ENCODE measurements at regions of chr9 and their contacts with region 1.

Region 1: GRCh38 chr9:107727086-107727780 is 237.7 kb upstream of the KLF4 start:
- DNase-seq: no peak
- ATAC-seq: no peak
- H3K4me3 ChIP-seq: no peak overlapping the region
- H3K4me3 Mint-ChIP-seq: no peak overlapping the region
- H3K27ac ChIP-seq: no peak overlapping the region
- H3K27ac Mint-ChIP-seq: no peak overlapping the region
- H3K4me1 ChIP-seq: no peaks in the 10 kb centered on the region
- H3K4me1 Mint-ChIP-seq: no peaks in the 10 kb centered on the region
- H3K27me3 ChIP-seq: no peaks in the 10 kb centered on the region
- H3K27me3 Mint-ChIP-seq: peaks cover 0 to 2% of the 10 kb centered on the region in 2 donors
- CTCF ChIP-seq: no peak

Region 2: DNA sequence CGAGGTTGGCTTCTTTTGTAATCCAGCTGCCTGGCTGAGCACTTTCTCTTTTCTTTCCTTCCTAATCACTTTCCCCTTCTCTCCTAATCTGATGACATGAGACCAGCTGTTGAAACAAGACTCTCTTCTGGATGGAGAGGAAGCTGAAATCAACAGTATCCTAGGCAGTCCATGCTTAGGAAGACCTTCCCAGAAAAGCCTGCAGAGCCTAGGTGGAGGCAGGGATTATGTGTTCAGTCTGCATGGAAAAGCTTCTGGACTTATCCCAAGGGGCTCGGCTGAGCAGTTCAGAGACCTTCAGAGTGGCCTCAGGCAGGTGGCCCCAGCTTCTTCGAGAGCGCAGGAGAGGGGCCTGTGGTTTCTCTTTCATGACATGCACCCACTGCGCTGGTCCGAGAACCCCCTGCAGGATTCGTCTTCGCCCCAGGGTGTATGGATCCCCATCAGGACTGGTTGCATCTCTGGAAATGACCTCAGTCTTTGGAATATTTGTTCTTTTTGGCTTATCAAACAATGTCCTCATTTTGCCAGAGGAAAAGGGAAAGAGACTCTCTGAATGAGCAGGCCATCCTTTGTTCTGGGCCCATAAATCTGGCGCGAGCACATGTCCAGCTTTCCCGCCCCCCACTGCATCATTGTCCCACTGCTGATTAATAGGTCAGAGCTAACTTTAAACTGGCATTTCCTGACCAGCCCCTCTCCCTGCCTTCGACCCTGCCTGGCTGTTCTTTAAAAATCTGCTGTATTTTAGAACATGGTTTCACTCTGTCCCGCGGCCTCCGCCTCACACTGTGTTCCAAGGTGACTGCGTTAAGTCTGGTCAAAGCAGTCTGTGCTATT is 59.8 kb before region 1 on chr9:
- intact Hi-C with region 1: loop called (anchors 10 kb)
- DNase-seq: no peak
- ATAC-seq: no peak
- H3K4me3 ChIP-seq: no peak overlapping the region
- H3K4me3 Mint-ChIP-seq: no peak overlapping the region
- H3K27ac ChIP-seq: no peak overlapping the region
- H3K27ac Mint-ChIP-seq: no peak overlapping the region
- H3K4me1 ChIP-seq: no peaks in the 10 kb centered on the region
- H3K4me1 Mint-ChIP-seq: no peaks in the 10 kb centered on the region
- H3K27me3 ChIP-seq: no peaks in the 10 kb centered on the region
- H3K27me3 Mint-ChIP-seq: peaks cover 0 to 5% of the 10 kb centered on the region in 2 donors
- CTCF ChIP-seq: no peak

Measured in natural killer cell (primary cell).